Sigmoid colon (tissue), 7 donors: ENCODE measurements at regions of chr6 and their contacts with region 1.

Region 1: GRCh38 chr6:7219310-7219709 is 93.7 kb downstream of the SSR1 start:
- DNase-seq: no peak
- H3K4me3 ChIP-seq: no peak overlapping the region
- H3K27ac ChIP-seq: peak overlapping the region in 1 of 4 donors; percentile 16
- H3K4me1 ChIP-seq: peaks cover 0 to 19% (median 13%) of the 10 kb centered on the region in 4 donors
- H3K27me3 ChIP-seq: no peaks in the 10 kb centered on the region
- CTCF ChIP-seq: no peak
- EP300 ChIP-seq: no peak
- POLR2A ChIP-seq: no peak

Region 2: DNA sequence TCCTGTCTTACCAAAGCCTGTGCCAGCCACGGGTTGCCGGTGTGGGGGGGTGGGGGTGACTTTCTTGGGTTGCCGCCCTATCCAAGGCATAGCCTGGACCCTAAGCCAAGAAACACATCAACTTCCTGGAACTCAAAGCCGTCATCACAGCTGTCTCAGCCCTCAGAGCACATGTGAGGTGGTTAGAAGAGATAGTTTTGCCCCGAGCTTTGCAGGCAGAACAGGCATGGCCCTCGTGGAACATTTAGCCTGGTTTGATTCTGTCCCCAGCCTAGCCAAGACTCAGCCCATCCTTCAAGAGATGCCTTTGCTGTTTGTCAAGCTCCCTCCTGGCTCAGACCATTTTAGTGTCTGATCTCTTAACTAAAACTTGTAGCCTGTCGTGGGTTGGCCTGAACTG is 46.7 kb before region 1 on chr6:
- intact Hi-C with region 1: loop called (anchors 5 kb)
- DNase-seq: no peak
- H3K4me3 ChIP-seq: no peak overlapping the region
- H3K27ac ChIP-seq: peak overlapping the region in 2 of 4 donors; percentile 18 to 29
- H3K4me1 ChIP-seq: peaks cover 0 to 64% (median 56%) of the 10 kb centered on the region in 4 donors
- H3K27me3 ChIP-seq: no peaks in the 10 kb centered on the region
- CTCF ChIP-seq: no peak
- EP300 ChIP-seq: no peak
- POLR2A ChIP-seq: no peak